Calu3 (cell line): ENCODE measurements at regions of chr11 and their contacts with region 1.

Region 1: GRCh38 chr11:123261345-123262106 is 66.5 kb upstream of the CLMP start:
- DNase-seq: peak; percentile 82
- H3K4me3 Mint-ChIP-seq: peak overlapping the region; percentile 48
- H3K27ac Mint-ChIP-seq: no peak overlapping the region
- H3K4me1 Mint-ChIP-seq: no peaks in the 10 kb centered on the region
- H3K27me3 Mint-ChIP-seq: peaks cover 40% of the 10 kb centered on the region
- CTCF ChIP-seq: peak; percentile 51

Region 2: GRCh38 chr11:123103326-123103980 is 158.1 kb before region 1 on chr11:
- CTCF ChIA-PET with region 1: interaction called, 19 read pairs
- intact Hi-C with region 1: no loop called
- DNase-seq: peak; percentile 20
- H3K4me3 Mint-ChIP-seq: no peak overlapping the region
- H3K27ac Mint-ChIP-seq: no peak overlapping the region
- H3K4me1 Mint-ChIP-seq: no peaks in the 10 kb centered on the region
- H3K27me3 Mint-ChIP-seq: peaks cover 19% of the 10 kb centered on the region
- CTCF ChIP-seq: peak; percentile 42